ENCODE measurements at regions of chr5 and their contacts with region 1.

Region 1: DNA sequence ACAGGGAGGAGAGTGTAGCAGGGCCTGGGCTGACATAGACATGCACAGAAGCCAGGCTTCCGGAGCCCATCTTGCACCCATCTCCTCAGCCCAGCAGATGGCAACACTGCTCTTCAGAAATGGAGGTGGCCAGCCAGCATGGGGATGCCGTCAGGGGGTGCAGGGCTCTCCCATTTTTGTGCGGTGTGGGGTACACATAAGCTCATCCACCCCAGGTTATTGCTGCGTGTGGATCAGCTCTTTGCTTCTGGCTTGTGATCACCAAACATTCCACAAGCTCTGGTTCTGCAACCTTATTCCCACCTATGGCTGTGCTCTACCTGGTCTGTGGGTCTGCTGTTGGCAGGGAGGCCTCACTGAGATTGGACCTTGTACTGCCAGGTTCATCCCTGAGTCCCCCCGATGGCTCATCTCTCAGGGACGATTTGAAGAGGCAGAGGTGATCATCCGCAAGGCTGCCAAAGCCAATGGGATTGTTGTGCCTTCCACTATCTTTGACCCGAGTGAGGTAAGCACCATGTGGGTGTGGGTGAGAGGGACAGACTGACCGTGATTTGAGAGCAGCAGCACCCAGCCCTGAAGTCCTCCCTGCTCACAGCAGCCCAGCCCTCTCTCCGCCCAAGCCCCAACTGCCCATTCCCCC is 17.3 kb downstream of the SLC22A5 start:
- DNase-seq: peak; percentile 86 to 87
- ATAC-seq: peak; percentile 89
- H3K4me3 ChIP-seq: no peak overlapping the region
- H3K27ac ChIP-seq: peak overlapping the region; percentile 34 to 80
- H3K4me1 ChIP-seq: peaks cover 1 to 3% of the 10 kb centered on the region in 2 donors
- H3K27me3 ChIP-seq: no peaks in the 10 kb centered on the region

Region 2: GRCh38 chr5:132293992-132294727 is 92.6 kb before region 1 on chr5 and contains the start of gene SLC22A4:
- intact Hi-C with region 1: no loop called
- DNase-seq: peak; percentile 96 to 97
- ATAC-seq: peak; percentile 93
- H3K4me3 ChIP-seq: peak within 1 kb of the TSS; percentile 42 to 48
- H3K27ac ChIP-seq: peak within 1 kb of the TSS; percentile 18 to 98
- H3K4me1 ChIP-seq: no peaks in the 10 kb centered on the region
- H3K27me3 ChIP-seq: no peaks in the 10 kb centered on the region
- total RNA-seq, gene SLC22A4: 4.6 to 5.5 TPM

Region 3: GRCh38 chr5:132410451-132411381 is 24.0 kb after region 1 on chr5:
- intact Hi-C with region 1: loop called (anchors 2 kb)
- DNase-seq: peak; percentile 89 to 93
- ATAC-seq: peak; percentile 86
- H3K4me3 ChIP-seq: peak overlapping the region; percentile 54 to 60
- H3K27ac ChIP-seq: peak overlapping the region; percentile 51 to 68
- H3K4me1 ChIP-seq: peaks cover 0 to 2% of the 10 kb centered on the region in 2 donors
- H3K27me3 ChIP-seq: no peaks in the 10 kb centered on the region

Region 4: DNA sequence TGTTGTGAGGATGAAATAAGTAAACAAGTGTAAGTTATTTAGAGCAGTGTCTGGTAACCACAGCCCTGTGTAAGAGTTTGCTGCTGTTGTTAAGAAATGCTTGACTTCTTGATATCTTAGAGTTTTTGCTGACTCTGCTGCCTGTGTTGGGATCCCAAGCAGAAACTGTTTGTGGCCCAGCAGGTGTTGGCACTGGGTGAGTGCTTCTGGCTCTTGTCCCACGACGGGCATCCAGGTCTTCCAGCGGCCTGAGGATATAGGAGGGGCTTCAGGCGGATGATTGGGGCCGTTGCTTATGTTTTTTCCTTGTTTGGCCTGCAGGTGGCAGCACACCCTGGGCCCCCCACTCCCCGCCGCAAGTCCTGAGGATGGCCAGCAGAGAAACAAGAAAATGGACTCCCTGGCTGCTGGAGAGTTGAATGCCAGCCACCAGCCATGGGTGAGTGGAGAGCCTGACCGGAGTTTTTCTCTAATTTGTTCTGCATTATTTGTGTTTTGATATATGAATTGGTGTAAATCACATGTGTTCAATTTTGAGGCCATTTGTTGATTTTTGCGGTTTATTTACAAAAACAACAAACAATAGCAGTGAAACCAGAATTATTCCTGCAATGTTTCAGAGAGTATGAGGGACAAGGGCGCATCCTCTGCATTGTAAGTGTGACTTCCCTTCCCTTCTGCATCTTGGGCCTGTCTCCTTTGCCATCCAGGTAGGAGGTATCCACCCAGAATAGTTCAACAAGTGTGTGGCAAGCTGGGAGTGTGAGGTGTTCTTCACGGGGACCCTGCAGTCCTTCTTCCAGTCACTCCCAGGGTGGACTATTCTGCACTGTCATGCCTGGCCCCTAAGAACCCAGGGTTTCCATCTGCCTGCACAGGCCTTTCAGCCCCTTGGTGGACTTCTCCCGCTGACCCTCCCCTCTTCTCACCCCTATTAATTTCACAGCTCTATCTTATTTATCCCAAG is 33.0 kb after region 1 on chr5:
- intact Hi-C with region 1: loop called in 1 of 2 experiments (anchors 5 kb)
- DNase-seq: peak; percentile 73 to 86
- ATAC-seq: peak; percentile 90
- H3K4me3 ChIP-seq: no peak overlapping the region
- H3K27ac ChIP-seq: peak overlapping the region in 1 of 2 donors; percentile 43
- H3K4me1 ChIP-seq: peaks cover 4 to 9% of the 10 kb centered on the region in 2 donors
- H3K27me3 ChIP-seq: no peaks in the 10 kb centered on the region

Region 5: DNA sequence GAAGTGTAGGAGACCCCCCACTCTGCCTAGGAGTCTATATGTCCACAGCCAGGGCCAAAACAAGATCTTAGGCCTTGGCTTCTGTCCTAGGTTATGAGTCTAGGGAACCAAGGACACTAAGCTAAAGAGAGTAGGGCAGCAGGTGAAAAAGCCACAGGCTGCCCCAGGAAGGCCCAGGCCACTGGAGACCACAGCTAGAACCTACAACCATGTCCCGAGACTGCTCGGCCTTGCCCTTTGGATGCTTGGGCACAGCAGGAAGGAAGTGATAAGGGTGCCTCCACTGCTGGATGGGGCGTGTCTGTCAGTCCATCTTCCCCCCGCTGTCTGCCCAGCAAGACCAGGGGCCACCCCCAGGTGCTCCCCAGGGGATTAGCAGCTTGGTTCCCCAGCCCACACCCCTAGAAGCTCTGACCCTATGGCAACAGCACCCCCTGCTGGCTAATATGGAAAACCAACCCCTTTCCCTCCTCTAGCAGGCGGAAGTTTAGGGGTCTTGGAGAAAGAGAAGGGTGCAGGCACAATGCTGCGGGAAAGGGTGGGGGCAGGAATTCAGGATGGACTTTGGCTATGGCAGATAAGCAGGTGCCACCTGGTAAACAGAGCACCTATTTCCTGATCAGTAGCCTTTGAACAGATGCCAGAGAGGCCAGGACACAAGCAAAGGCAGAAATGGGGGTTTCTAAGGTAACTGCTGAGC is 114.3 kb after region 1 on chr5:
- intact Hi-C with region 1: loop called (anchors 1 kb)
- DNase-seq: peak; percentile 74 to 81
- ATAC-seq: peak; percentile 20
- H3K4me3 ChIP-seq: no peak overlapping the region
- H3K27ac ChIP-seq: no peak overlapping the region
- H3K4me1 ChIP-seq: no peaks in the 10 kb centered on the region
- H3K27me3 ChIP-seq: no peaks in the 10 kb centered on the region

Region 6: DNA sequence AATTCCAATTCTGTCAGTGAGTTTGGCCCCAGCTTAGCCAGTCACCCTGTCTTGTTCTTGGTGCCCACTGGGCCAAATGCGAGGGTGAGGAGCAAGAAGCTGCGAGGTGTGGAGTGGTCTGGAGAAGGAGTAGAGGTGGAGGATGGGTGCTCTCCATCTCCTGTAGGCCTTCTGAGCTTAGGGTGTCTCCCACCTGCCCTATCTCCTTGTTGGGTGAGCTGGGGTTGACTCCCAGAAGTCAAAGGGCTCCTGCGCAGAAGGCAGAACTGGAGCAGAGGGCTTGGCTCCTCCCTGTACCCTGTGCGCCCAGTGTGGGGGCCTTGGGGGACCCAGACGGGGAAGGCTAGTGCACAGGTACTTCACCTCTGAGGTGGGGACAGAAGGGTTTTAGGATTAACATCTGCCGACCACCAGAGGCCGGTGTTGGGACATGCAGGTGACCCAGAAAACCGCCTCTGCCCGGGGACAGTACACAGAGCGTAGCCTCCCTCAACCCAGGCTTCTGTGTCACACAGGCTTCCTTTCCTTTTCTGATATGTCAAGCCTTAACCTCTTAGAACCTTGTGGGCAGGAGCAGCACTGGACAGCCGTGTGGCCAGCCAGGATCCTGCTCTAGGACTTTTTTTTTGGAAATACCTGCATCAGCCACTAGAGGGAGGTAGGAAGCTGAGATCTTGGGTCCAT is 139.7 kb after region 1 on chr5:
- intact Hi-C with region 1: no loop called
- DNase-seq: no peak
- ATAC-seq: peak; percentile 80
- H3K4me3 ChIP-seq: no peak overlapping the region
- H3K27ac ChIP-seq: no peak overlapping the region
- H3K4me1 ChIP-seq: no peaks in the 10 kb centered on the region
- H3K27me3 ChIP-seq: no peaks in the 10 kb centered on the region

Region 7: DNA sequence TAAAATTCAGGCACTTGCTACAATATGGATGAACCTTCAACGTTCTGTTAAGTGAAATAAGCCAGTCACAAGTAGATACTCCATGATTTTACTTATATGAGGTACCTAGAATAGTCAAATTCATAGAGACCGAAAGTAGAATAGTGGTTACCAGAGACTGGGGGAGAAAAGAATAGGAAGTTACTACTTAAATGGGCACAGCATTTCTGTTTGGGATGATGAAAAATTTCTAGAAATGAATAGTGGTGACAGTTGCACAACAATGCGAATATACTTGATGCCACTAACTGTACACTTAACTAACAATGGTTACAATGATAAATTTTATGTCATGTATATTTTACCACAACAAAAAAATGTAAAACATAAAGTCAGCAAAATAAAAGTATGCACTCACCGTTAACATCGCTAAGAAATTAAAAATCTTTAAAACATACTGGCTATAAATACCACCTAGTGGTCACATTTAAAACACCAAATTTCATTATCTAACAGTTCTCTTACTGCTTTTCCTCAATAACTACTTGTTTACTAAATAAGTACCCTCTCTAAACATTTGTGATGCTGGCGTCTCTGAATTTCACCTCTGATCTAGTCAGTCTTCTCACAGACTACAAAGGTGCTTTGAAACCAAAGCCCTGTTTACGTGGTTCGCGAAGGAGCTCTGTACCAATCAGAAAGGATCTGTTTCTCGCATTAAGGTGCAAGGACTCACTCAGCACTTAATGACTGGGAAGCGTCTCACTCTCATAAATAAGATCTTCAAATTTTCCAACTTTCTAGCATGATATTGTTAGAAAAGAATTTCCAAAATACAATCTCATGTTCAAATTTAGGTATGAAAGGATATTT is 327.9 kb after region 1 on chr5:
- intact Hi-C with region 1: loop called in 1 of 2 experiments (anchors 10 kb)
- DNase-seq: no peak
- ATAC-seq: no peak
- H3K4me3 ChIP-seq: no peak overlapping the region
- H3K27ac ChIP-seq: no peak overlapping the region
- H3K4me1 ChIP-seq: no peaks in the 10 kb centered on the region
- H3K27me3 ChIP-seq: no peaks in the 10 kb centered on the region

Measured in aorta (tissue), 5 donors.